ENCODE measurements at regions of chr1 and their contacts with region 1.

Region 1: GRCh38 chr1:204398217-204399081 is 13.2 kb downstream of the PPP1R15B start:
- DNase-seq: peak; percentile 81
- ATAC-seq: peak; percentile 100
- H3K4me3 Mint-ChIP-seq: no peak overlapping the region
- H3K27ac Mint-ChIP-seq: no peak overlapping the region
- H3K4me1 Mint-ChIP-seq: no peaks in the 10 kb centered on the region
- H3K27me3 Mint-ChIP-seq: no peaks in the 10 kb centered on the region; the same call in 1 of the 2 replicates
- CTCF ChIP-seq: peak; percentile 72

Region 2: GRCh38 chr1:204151552-204152309 is 246.7 kb before region 1 on chr1 and contains the start of gene ETNK2:
- CTCF ChIA-PET with region 1: interaction called, 15 read pairs
- POLR2A ChIA-PET with region 1: no interaction called
- DNase-seq: peak; percentile 66
- ATAC-seq: peak; percentile 29
- H3K4me3 Mint-ChIP-seq: peak within 1 kb of the TSS; percentile 73
- H3K27ac Mint-ChIP-seq: no peak within 1 kb of the TSS
- H3K4me1 Mint-ChIP-seq: peaks cover 39% of the 10 kb centered on the region
- H3K27me3 Mint-ChIP-seq: peaks cover 29% of the 10 kb centered on the region
- CTCF ChIP-seq: no peak
- total RNA-seq, gene ETNK2: 18.3 to 20.2 TPM (median 19.7 TPM) in 3 replicates

Region 3: DNA sequence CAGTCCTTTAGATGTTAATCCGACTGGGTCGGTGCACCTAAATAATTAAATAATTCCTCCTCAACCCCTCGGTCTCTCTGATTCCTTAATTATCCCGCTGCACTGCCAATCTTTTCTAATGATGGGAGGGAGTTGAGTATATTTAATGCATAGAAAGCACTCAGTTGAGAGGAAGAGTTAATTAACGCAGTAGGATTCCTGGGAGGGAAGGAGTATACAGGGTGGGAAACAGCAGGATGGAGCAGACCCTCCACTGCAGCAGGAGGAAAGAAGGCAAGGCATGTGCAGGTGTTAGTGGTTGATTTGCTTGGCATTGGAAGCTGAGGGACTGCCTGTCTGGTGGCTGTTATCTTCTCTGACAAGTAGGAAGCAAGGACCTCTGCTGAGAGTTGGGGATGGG is 222.4 kb before region 1 on chr1:
- CTCF ChIA-PET with region 1: no interaction called
- POLR2A ChIA-PET with region 1: no interaction called
- DNase-seq: no peak
- ATAC-seq: no peak
- H3K4me3 Mint-ChIP-seq: no peak overlapping the region
- H3K27ac Mint-ChIP-seq: no peak overlapping the region
- H3K4me1 Mint-ChIP-seq: no peaks in the 10 kb centered on the region
- H3K27me3 Mint-ChIP-seq: peaks cover 45% of the 10 kb centered on the region
- CTCF ChIP-seq: no peak

Region 4: GRCh38 chr1:204207136-204207616 is 191.3 kb before region 1 on chr1:
- CTCF ChIA-PET with region 1: interaction called, 20 read pairs
- POLR2A ChIA-PET with region 1: no interaction called
- DNase-seq: peak; percentile 93
- ATAC-seq: peak; percentile 98
- H3K4me3 Mint-ChIP-seq: no peak overlapping the region
- H3K27ac Mint-ChIP-seq: no peak overlapping the region
- H3K4me1 Mint-ChIP-seq: no peaks in the 10 kb centered on the region
- H3K27me3 Mint-ChIP-seq: no peaks in the 10 kb centered on the region; the same call in 1 of the 2 replicates
- CTCF ChIP-seq: peak; percentile 94

Region 5: GRCh38 chr1:204357551-204358490 is 40.6 kb before region 1 on chr1:
- CTCF ChIA-PET with region 1: interaction called, 37 read pairs
- POLR2A ChIA-PET with region 1: no interaction called
- DNase-seq: no peak
- ATAC-seq: peak; percentile 25
- H3K4me3 Mint-ChIP-seq: no peak overlapping the region
- H3K27ac Mint-ChIP-seq: no peak overlapping the region
- H3K4me1 Mint-ChIP-seq: peaks cover 30% of the 10 kb centered on the region
- H3K27me3 Mint-ChIP-seq: peaks cover 14% of the 10 kb centered on the region
- CTCF ChIP-seq: no peak

Region 6: GRCh38 chr1:204384994-204385352 is 13.5 kb before region 1 on chr1:
- CTCF ChIA-PET with region 1: interaction called, 105 read pairs
- POLR2A ChIA-PET with region 1: interaction called, 3 read pairs
- DNase-seq: no peak
- ATAC-seq: no peak
- H3K4me3 Mint-ChIP-seq: no peak overlapping the region
- H3K27ac Mint-ChIP-seq: no peak overlapping the region
- H3K4me1 Mint-ChIP-seq: no peaks in the 10 kb centered on the region
- H3K27me3 Mint-ChIP-seq: peaks cover 13% of the 10 kb centered on the region
- CTCF ChIP-seq: no peak

Region 7: GRCh38 chr1:204480515-204480914 is 82.1 kb after region 1 on chr1:
- CTCF ChIA-PET with region 1: interaction called, 13 read pairs
- POLR2A ChIA-PET with region 1: no interaction called
- DNase-seq: no peak
- ATAC-seq: no peak
- H3K4me3 Mint-ChIP-seq: no peak overlapping the region
- H3K27ac Mint-ChIP-seq: no peak overlapping the region
- H3K4me1 Mint-ChIP-seq: peaks cover 61% of the 10 kb centered on the region
- H3K27me3 Mint-ChIP-seq: no peaks in the 10 kb centered on the region; the same call in 1 of the 2 replicates
- CTCF ChIP-seq: no peak

Region 8: DNA sequence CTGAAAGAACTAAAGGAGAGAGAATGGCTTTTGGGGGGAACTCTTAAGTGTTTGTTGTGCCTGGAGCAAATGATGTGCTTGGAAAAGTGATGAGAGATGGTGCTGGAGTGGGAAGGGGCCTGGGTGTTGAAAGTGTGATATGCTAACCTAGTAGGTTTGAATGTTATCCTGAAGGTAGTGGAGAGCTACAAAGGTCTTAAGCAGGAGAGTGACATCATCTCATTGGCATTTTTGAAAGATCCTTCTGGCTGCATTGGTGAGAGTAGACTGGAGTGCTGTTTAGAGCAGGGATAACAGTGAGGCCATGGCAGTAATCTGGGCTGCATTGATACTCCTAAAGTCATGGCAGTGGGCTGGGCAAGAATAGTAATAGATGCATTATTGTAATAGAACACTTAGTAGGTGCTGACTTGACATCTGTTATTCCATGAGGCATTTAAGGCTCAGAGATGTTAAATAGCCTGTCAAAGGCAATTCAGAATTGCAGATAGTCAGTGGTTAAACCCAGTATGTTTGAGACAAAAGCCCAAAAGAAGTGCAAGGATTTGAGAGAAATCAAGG is 162.2 kb after region 1 on chr1:
- CTCF ChIA-PET with region 1: interaction called, 13 read pairs
- POLR2A ChIA-PET with region 1: no interaction called
- DNase-seq: no peak
- ATAC-seq: peak; percentile 66
- H3K4me3 Mint-ChIP-seq: no peak overlapping the region
- H3K27ac Mint-ChIP-seq: peak overlapping the region; percentile 8; the same call in 1 of the 2 replicates
- H3K4me1 Mint-ChIP-seq: peaks cover 28% of the 10 kb centered on the region
- H3K27me3 Mint-ChIP-seq: no peaks in the 10 kb centered on the region
- CTCF ChIP-seq: no peak